GM12878 (cell line): ENCODE measurements at regions of chrX and their contacts with region 1.

Region 1: GRCh38 chrX:74015379-74016019 is 288.5 kb upstream of the ZCCHC13 start:
- DNase-seq: peak; percentile 37
- ATAC-seq: peak; percentile 100
- H3K4me3 ChIP-seq: no peak overlapping the region
- H3K27ac ChIP-seq: no peak overlapping the region
- H3K4me1 ChIP-seq: no peaks in the 10 kb centered on the region
- H3K27me3 ChIP-seq: no peaks in the 10 kb centered on the region
- CTCF ChIP-seq: peak; percentile 76 to 97 (median 83)
- EP300 ChIP-seq: no peak
- POLR2A ChIP-seq: no peak
- RAD21 ChIP-seq: peak; percentile 99

Region 2: DNA sequence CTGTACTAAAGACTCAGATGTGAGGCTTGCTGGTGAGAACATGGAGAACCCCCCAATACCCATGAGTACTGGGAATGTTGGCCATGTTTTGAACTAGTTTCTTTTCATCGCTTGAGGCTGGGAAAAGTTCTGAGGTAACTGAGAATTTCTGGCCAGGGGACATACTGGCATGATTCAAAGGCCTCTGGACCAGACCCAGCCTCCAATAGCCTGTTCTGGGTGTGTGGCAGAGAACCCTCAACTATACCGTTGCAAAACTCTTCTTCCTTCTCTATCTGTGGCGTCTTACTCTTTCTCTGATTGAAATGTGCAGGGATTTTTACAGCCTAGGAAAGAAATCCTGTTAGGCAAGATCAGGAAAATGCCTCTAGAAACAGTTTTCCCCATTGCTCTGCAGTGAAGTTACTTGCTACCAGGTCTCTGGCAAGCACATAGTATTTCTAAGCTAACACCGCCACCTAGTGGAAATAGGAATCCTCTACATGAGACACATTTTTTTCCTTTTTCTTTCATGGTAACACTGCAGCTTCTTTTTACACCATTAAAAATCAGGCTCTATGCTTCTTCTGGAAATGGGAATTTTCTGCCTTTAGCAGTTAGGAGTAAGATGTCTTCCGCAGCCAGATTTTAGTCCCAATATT is 117.8 kb after region 1 on chrX:
- CTCF ChIA-PET with region 1: interaction called, 3 read pairs
- POLR2A ChIA-PET with region 1: no interaction called
- RAD21 ChIA-PET with region 1: interaction called, 4 read pairs
- SMC1A ChIA-PET with region 1: interaction called, 4 read pairs
- in situ Hi-C with region 1: loop called (anchors 5 kb)
- intact Hi-C with region 1: loop called (anchors 1 kb)
- DNase-seq: peak; percentile 19
- ATAC-seq: peak; percentile 93
- H3K4me3 ChIP-seq: no peak overlapping the region
- H3K27ac ChIP-seq: no peak overlapping the region
- H3K4me1 ChIP-seq: no peaks in the 10 kb centered on the region
- H3K27me3 ChIP-seq: no peaks in the 10 kb centered on the region
- CTCF ChIP-seq: peak; percentile 71 to 80 (median 73)
- EP300 ChIP-seq: no peak
- POLR2A ChIP-seq: no peak
- RAD21 ChIP-seq: peak; percentile 93

Region 3: GRCh38 chrX:74218895-74219294 is 203.4 kb after region 1 on chrX:
- CTCF ChIA-PET with region 1: no interaction called
- POLR2A ChIA-PET with region 1: no interaction called
- RAD21 ChIA-PET with region 1: no interaction called
- SMC1A ChIA-PET with region 1: no interaction called
- in situ Hi-C with region 1: no loop called
- intact Hi-C with region 1: no loop called
- DNase-seq: no peak
- ATAC-seq: no peak
- H3K4me3 ChIP-seq: no peak overlapping the region
- H3K27ac ChIP-seq: no peak overlapping the region
- H3K4me1 ChIP-seq: no peaks in the 10 kb centered on the region
- H3K27me3 ChIP-seq: no peaks in the 10 kb centered on the region
- CTCF ChIP-seq: no peak
- EP300 ChIP-seq: no peak
- POLR2A ChIP-seq: no peak
- RAD21 ChIP-seq: no peak

Region 4: DNA sequence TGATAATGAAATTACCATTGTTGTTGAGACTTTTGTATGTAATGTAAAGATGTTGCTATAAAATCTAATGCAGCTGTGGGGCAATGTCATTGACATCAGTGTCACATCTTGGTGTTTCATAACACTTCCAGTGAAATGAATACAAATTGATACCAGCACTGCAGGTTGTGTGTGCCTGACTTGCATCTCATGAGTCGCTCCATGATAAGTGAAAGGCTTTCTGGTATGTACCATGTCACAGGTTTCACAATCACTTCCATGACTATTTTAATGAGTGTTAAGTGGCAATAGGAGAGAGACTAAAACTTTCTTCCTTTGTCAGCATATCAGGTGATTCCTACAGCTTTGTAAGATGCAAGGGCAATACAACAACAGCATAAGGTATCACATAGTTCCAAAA is 1046.2 kb after region 1 on chrX:
- CTCF ChIA-PET with region 1: no interaction called
- POLR2A ChIA-PET with region 1: no interaction called
- RAD21 ChIA-PET with region 1: no interaction called
- SMC1A ChIA-PET with region 1: no interaction called
- in situ Hi-C with region 1: no loop called
- intact Hi-C with region 1: no loop called
- DNase-seq: no peak
- ATAC-seq: no peak
- H3K4me3 ChIP-seq: no peak overlapping the region
- H3K27ac ChIP-seq: no peak overlapping the region
- H3K4me1 ChIP-seq: no peaks in the 10 kb centered on the region
- H3K27me3 ChIP-seq: no peaks in the 10 kb centered on the region
- CTCF ChIP-seq: no peak
- EP300 ChIP-seq: no peak
- POLR2A ChIP-seq: no peak
- RAD21 ChIP-seq: no peak